Mammary epithelial cell (primary cell): ENCODE measurements at regions of chr1 and their contacts with region 1.

Region 1: DNA sequence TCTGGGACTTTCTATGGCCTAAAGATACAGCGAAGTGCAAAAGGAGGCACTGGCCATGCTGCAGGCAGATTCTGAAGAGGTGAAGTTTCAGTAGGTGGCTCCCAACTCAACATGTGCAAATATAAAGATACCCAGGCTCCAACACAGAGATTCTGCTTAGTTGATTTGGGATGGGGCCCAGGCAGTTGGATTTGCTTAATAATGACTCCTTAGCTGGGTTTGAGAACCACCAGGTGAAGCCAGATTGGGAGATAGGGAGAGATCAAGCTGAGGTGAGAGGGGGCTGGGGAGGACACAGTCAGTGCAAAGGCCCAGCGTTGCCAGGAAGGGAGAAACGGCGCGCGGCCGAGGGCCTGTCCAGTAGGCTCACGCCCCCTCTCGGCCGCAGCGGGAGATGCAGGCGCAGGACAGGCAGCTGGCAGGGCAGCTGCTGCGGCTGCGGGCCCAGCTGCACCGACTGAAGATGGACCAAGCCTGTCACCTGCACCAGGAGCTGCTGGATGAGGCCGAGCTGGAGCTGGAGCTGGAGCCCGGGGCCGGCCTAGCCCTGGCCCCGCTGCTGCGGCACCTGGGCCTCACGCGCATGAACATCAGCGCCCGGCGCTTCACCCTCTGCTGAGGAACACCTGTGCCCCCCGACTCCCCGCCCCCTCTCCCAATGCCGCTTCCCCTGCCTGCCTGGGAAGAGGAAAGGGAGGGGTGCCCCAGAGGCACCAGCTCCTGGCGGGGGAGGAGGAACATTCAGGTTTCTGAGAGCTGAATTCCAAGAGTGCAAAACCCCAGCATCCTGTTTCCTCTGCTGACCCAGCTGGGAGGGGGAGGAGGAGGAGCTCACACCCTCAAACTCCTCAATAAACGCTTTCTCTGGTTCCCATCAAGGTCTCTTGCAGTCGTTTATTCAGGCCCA is 1.2 kb downstream of the FAM167B start:
- DNase-seq: peak; percentile 65
- H3K4me3 ChIP-seq: no peak overlapping the region
- H3K27ac ChIP-seq: no peak overlapping the region
- H3K4me1 ChIP-seq: peaks cover 34% of the 10 kb centered on the region
- H3K27me3 ChIP-seq: no peaks in the 10 kb centered on the region
- CTCF ChIP-seq: peak; percentile 73 to 81

Region 2: DNA sequence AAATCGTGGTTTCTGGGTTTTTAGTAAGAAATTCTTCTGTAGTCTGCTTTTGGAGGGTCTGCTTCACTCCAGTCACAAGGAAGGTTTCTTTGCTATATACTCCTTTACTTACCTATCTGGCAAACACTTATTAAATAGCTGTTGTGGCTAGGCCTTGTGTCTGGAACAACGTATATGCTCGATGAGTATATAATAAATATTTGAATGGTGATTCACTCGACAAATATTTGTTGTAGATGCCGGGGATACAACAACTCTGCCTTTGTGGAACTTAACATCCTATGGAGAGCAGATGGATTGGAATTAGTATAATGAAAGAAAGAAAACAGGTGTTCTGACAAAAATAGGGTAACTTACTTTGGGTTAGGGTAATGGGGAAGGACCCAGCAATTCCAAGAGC is 109.3 kb before region 1 on chr1:
- CTCF ChIA-PET with region 1: no interaction called
- dilution Hi-C with region 1: no loop called
- in situ Hi-C with region 1: no loop called
- intact Hi-C with region 1: no loop called
- DNase-seq: peak; percentile 41
- H3K4me3 ChIP-seq: no peak overlapping the region
- H3K27ac ChIP-seq: peak overlapping the region; percentile 57
- H3K4me1 ChIP-seq: peaks cover 16% of the 10 kb centered on the region
- H3K27me3 ChIP-seq: no peaks in the 10 kb centered on the region
- CTCF ChIP-seq: no peak

Region 3: DNA sequence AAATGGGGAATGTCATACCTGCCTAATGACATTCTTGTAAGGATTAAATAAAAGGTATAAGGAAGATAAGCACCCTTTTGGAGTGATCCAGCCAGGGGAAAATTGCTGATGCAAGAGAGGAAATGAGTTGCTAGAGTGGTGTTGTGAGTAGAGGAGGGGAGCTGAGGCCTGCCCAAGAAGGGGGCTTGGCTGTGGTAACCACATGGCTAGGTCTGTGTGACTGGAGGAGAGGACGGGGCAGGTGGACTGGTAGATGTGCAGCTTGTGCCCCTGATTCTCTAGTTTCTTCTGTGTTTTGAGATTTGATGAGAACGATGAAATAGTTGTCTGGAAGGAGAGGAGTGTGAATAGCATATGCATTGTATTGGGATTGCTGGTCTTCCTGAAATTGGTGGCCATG is 62.2 kb before region 1 on chr1:
- CTCF ChIA-PET with region 1: no interaction called
- dilution Hi-C with region 1: loop called (anchors 5 kb)
- in situ Hi-C with region 1: no loop called
- intact Hi-C with region 1: no loop called
- DNase-seq: no peak
- H3K4me3 ChIP-seq: no peak overlapping the region
- H3K27ac ChIP-seq: no peak overlapping the region
- H3K4me1 ChIP-seq: peaks cover 12% of the 10 kb centered on the region
- H3K27me3 ChIP-seq: no peaks in the 10 kb centered on the region
- CTCF ChIP-seq: no peak

Region 4: DNA sequence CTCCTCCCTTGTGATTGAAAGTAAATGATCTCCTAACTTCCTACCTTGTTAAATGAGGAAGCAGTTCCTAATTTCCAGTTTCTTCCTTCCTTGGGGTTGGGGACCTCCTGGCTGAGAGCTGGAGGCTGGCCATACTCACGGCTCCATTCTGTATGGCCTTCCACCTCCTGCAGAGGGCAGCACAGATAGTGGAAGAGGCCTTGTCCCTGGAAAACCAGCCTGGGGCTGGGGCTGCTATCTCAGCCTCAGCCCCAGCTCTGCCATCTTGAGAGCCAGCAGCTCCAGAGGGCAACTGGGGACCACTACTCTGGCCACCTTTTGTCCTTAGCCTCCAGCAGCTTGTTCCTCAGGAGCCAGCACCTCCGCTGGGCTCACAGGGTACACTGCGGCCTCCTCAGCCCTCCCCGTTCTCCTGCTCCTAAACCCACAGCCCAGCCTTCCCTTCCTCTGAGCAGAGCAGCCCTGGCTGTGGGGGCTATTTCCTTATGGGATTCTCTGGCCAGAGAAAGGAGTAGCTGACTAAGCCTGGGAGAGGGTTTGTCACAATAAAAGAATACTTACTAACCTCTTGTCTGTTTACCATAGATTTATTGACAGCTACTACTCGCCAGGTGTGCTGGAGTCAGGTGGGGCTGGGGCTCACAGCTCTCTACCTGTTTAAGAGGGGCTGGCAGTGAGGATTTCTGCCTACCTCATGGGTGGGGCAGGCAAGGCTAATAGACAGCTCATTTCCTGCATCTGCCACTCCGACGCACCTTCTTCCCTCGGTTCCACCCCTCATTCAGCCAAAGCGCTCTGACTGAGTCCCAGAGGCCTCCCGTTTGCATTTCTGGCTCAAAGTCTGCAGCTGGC is 32.4 kb before region 1 on chr1:
- CTCF ChIA-PET with region 1: interaction called, 8 read pairs
- dilution Hi-C with region 1: no loop called
- in situ Hi-C with region 1: no loop called
- intact Hi-C with region 1: loop called (anchors 1 kb)
- DNase-seq: peak; percentile 39
- H3K4me3 ChIP-seq: no peak overlapping the region
- H3K27ac ChIP-seq: no peak overlapping the region
- H3K4me1 ChIP-seq: peaks cover 12% of the 10 kb centered on the region
- H3K27me3 ChIP-seq: no peaks in the 10 kb centered on the region
- CTCF ChIP-seq: peak; percentile 84 to 91

Region 5: GRCh38 chr1:32329931-32330466 is 81.8 kb after region 1 on chr1:
- CTCF ChIA-PET with region 1: no interaction called
- dilution Hi-C with region 1: loop called (anchors 5 kb)
- in situ Hi-C with region 1: no loop called
- intact Hi-C with region 1: no loop called
- DNase-seq: no peak
- H3K4me3 ChIP-seq: no peak overlapping the region
- H3K27ac ChIP-seq: no peak overlapping the region
- H3K4me1 ChIP-seq: peaks cover 12% of the 10 kb centered on the region
- H3K27me3 ChIP-seq: no peaks in the 10 kb centered on the region
- CTCF ChIP-seq: no peak

Region 6: DNA sequence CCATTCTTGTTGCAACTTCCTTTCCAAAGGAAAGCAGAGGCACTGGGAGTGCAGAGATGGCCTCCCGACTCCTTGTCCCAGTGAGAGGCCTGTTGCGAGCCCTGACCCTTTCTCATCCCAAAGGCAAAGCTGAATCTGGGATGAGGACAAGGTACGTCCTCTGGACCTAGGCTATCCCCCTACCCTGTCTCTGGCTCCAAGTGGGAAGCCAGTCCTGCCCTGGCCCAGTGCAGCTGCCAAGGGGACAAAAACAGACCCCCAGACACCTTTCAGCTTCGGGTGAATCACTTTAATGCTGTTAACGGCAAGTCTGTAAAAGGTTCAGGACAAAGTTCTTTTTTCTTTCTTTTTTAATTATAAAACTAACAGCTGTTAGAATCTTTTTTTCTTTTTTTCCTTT is 116.6 kb after region 1 on chr1:
- CTCF ChIA-PET with region 1: interaction called, 36 read pairs
- dilution Hi-C with region 1: no loop called
- in situ Hi-C with region 1: no loop called
- intact Hi-C with region 1: no loop called
- DNase-seq: no peak
- H3K4me3 ChIP-seq: no peak overlapping the region
- H3K27ac ChIP-seq: no peak overlapping the region
- H3K4me1 ChIP-seq: no peaks in the 10 kb centered on the region
- H3K27me3 ChIP-seq: no peaks in the 10 kb centered on the region
- CTCF ChIP-seq: no peak